ENCODE measurements at regions of chr18 and their contacts with region 1.

Region 1: GRCh38 chr18:75588412-75588811 is 160.9 kb upstream of the SMIM21 start:
- DNase-seq: no peak

Region 2: GRCh38 chr18:75607701-75608100 is 19.3 kb after region 1 on chr18:
- intact Hi-C with region 1: no loop called
- DNase-seq: no peak

Region 3: DNA sequence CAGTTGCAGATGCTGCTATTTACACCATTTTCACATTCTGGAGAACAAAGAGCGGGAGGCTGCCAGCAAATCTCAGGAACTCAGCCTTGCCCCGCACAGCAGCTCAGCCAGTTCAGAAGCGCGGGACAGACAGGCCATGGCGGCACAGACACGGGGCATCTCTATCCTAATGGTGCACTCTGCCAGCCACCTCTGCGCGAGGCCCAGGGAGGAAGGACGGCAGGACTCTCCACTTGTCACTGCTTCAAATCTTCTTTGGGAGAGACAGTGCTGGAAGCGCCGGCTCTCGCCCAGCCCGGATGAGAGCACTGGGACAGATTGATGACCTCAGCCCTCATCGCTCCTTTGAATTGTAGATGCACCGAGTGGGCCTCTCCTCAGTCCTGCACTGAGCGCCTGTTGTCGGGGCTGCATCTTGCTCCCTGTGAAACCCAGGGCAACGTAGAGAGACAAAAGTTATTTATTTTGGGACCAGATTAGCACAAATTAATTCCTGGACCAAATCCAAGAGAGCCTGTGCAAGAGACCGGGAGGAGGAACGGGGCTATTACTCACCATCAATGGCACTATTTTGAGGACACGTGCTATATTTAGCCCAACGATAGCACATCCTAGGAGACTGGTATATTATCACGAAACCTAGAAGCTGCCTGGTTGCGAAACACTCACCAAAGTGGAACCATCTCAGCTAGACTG is 50.5 kb after region 1 on chr18:
- intact Hi-C with region 1: loop called in 1 of 2 experiments (anchors 1 kb)
- DNase-seq: no peak

Measured in posterior vena cava (tissue), 2 donors.